ENCODE measurements at regions of chr13 and their contacts with region 1.

Region 1: DNA sequence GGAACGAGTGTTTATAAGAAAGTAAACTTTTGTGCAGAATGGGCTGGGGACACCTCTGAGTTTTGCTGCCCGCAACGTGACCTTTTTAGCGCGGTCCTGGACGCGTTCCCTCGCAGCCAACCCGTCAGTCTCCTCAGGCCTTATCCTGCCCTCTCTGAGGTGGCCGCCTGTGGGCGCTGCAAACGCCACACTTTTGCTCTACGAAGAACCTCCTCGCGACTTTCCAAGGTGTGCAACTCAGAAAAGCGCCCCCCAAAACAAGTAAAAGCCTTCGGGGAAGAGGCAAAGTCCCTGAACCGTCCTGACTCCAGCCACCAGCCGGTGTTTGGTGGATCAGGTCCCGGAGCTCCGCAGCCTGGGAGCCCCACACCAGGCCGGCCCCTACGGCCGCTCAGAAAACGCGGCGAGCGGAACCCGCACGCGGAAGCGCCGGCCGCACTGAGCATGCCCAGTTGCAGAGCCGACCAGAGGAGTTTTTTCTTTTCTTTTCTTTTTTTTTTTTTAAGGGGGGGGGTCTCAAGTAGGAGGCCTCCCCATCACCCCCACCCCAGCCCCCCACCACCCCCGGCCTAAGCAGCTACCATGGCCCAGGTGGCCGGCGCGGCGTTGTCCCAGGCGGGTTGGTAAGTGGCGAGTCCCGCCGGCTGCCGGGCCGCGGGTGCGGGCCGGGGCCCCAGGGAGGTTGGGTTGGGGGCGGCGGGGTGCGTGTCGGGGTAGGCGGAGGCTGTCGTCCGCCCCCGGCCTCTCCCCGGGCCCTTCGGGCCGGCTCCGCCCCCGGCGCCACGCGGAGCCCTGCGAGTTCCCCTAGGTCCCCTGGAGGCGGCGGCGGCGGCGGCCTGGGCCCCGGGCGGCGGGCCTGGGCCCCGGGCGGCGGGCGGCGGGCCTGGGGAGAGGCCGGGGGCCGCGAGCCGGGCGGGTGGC is at the start of gene TDRD3:
- DNase-seq: peak; percentile 92
- H3K4me3 ChIP-seq: peak within 1 kb of the TSS; percentile 77 to 82 (median 80)
- H3K27ac ChIP-seq: peak within 1 kb of the TSS; percentile 95 to 99 (median 98)
- H3K4me1 ChIP-seq: peaks cover 0 to 24% (median 20%) of the 10 kb centered on the region in 4 donors
- H3K27me3 ChIP-seq: no peaks in the 10 kb centered on the region
- CTCF ChIP-seq: peak; percentile 60 to 82 (median 70)
- EP300 ChIP-seq: no peak
- POLR2A ChIP-seq: peak; percentile 58 to 66
- total RNA-seq, gene TDRD3: 27.4 to 43.5 (median 41.4) TPM

Region 2: GRCh38 chr13:60163478-60164233 is 233.4 kb before region 1 on chr13 and contains the start of gene DIAPH3:
- intact Hi-C with region 1: loop called (anchors 2 kb)
- DNase-seq: peak; percentile 97
- H3K4me3 ChIP-seq: peak within 1 kb of the TSS; percentile 60 to 79 (median 65)
- H3K27ac ChIP-seq: peak within 1 kb of the TSS; percentile 88 to 92 (median 90)
- H3K4me1 ChIP-seq: peaks cover 0 to 18% (median 14%) of the 10 kb centered on the region in 4 donors
- H3K27me3 ChIP-seq: no peaks in the 10 kb centered on the region
- CTCF ChIP-seq: no peak
- EP300 ChIP-seq: no peak
- POLR2A ChIP-seq: peak; percentile 74 to 76
- total RNA-seq, gene DIAPH3: 0.16 to 1.9 (median 1.1) TPM in 3 of 4 donors, not detected in the other

Region 3: DNA sequence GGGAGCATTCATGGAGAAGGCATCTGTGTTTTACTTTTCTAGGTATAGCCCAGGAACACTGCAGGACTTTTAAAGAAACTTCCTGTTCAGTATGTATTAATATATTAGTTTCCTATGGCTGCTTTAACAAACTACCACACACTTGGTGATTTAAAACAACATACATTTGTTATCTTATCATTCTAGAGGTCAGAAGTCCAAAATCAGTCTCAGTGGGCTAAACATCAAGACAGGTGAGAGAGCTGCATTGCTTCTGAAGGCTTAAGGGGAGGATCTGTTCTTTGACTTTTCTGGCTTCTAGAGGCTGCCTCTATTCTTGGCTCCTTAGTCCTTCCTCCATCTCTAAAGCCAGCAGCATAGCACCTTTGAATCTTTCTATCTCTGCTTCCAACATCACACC is 195.8 kb before region 1 on chr13:
- intact Hi-C with region 1: no loop called
- DNase-seq: no peak
- H3K4me3 ChIP-seq: no peak overlapping the region
- H3K27ac ChIP-seq: no peak overlapping the region
- H3K4me1 ChIP-seq: no peaks in the 10 kb centered on the region
- H3K27me3 ChIP-seq: no peaks in the 10 kb centered on the region
- CTCF ChIP-seq: no peak
- EP300 ChIP-seq: no peak
- POLR2A ChIP-seq: no peak